Endothelial cell of umbilical vein (primary cell): ENCODE measurements at regions of chr2 and their contacts with region 1.

Region 1: DNA sequence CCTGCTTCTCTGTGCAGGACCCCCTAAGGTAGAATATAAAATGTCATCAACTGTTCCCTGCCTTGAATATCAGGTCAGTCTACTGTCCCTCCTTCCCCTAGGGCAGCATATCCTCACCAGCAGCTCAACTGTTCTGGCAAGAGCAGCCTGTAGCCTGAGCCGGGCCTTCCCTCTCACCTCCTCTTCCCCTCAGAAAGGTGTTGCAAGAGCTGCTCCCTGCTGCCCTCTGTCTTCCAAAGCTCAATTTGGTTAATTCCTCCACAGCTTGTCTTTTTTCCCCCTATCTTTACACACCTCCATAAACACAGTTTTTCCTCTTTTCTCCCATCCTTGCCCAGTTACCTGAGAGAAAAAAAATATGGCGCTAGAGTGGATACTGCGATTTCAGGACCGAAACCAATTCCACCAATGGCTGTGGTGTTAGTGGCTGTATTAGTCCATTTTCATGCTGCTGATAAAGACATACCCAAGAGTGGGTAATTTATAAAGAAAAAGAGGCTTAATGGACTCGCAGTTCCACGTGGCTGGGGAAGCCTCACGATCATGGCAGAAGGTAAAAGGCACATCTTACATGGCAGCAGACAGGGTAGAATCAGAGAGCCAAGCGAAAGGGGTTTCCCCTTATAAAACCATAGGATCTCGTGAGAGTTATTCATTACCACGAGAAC is 184.7 kb downstream of the MREG start:
- DNase-seq: peak; percentile 52
- H3K4me3 ChIP-seq: no peak overlapping the region
- H3K27ac ChIP-seq: no peak overlapping the region
- H3K4me1 ChIP-seq: peaks cover 47% of the 10 kb centered on the region
- H3K27me3 ChIP-seq: no peaks in the 10 kb centered on the region
- CTCF ChIP-seq: peak; percentile 49 to 62
- POLR2A ChIP-seq: no peak

Region 2: DNA sequence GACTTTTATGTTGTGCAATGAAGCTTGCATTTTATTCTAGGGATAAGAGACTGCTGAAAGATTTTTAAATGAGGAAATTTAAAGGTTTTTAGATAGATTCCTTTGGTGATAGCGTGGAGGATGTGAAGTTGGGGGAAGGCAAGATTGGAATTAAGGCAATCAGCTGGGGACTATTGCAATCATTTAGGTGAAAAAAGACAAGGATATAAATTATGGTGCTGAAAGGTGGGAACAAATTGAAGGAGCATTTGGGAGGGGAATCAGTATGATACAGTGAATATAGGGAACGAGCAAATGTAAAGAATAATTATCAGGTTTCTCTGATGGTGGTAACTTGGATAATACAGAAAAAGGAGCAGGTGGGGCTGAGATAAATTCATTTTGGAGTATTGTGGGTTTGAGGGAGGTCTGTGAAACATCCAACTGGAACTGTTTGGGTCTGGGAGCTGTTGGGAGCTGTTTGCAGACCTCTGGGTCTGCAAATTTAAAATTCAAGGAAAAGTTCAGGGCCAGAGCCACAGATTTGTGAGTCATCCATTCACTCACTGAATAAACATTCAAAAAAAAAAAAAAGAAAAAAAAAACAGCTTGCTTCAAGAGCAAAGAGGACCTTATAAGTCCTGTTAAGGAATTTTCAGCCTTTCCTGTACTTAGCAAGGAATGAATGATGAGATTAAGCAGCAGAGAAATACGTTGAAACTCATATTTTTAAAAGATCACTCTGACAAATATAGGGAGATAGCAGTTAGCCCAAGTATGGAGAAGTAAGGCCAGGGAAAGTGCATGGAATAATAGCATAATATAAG is 135.3 kb before region 1 on chr2:
- CTCF ChIA-PET with region 1: interaction called, 4 read pairs
- POLR2A ChIA-PET with region 1: no interaction called
- dilution Hi-C with region 1: no loop called
- intact Hi-C with region 1: loop called (anchors 2 kb)
- DNase-seq: peak; percentile 85
- H3K4me3 ChIP-seq: no peak overlapping the region
- H3K27ac ChIP-seq: peak overlapping the region; percentile 83
- H3K4me1 ChIP-seq: peaks cover 33% of the 10 kb centered on the region
- H3K27me3 ChIP-seq: no peaks in the 10 kb centered on the region
- CTCF ChIP-seq: no peak
- POLR2A ChIP-seq: no peak

Region 3: DNA sequence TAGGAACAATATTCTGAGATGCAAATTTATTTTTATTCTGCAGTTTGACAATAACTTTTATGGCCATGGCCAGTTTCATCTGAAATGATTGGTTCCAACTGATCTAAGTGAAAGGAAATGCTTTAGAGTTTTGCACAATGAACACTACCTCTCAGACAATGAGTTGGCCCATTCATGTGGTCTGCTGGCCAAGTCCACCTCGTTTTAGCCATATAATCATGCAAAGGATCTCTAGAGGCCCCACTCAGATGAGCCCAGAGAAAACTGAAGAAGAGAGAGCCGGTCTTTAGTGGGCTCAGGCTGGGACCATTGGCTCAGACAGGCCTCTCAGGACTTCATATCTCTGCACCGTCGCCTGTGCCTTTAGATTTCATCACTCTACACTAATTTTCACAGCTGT is 70.0 kb before region 1 on chr2:
- CTCF ChIA-PET with region 1: no interaction called
- POLR2A ChIA-PET with region 1: interaction called, 4 read pairs
- dilution Hi-C with region 1: no loop called
- intact Hi-C with region 1: loop called (anchors 5 kb)
- DNase-seq: peak; percentile 87
- H3K4me3 ChIP-seq: no peak overlapping the region
- H3K27ac ChIP-seq: peak overlapping the region; percentile 69
- H3K4me1 ChIP-seq: peaks cover 39% of the 10 kb centered on the region
- H3K27me3 ChIP-seq: no peaks in the 10 kb centered on the region
- CTCF ChIP-seq: no peak
- POLR2A ChIP-seq: no peak

Region 4: GRCh38 chr2:215793747-215794595 is 34.7 kb before region 1 on chr2:
- CTCF ChIA-PET with region 1: interaction called, 15 read pairs
- POLR2A ChIA-PET with region 1: no interaction called
- dilution Hi-C with region 1: no loop called
- intact Hi-C with region 1: no loop called
- DNase-seq: peak; percentile 97
- H3K4me3 ChIP-seq: no peak overlapping the region
- H3K27ac ChIP-seq: peak overlapping the region; percentile 82
- H3K4me1 ChIP-seq: peaks cover 44% of the 10 kb centered on the region
- H3K27me3 ChIP-seq: no peaks in the 10 kb centered on the region
- CTCF ChIP-seq: no peak
- POLR2A ChIP-seq: no peak

Region 5: GRCh38 chr2:215817046-215817445 is 11.6 kb before region 1 on chr2:
- CTCF ChIA-PET with region 1: interaction called, 11 read pairs
- POLR2A ChIA-PET with region 1: no interaction called
- dilution Hi-C with region 1: no loop called
- intact Hi-C with region 1: no loop called
- DNase-seq: no peak
- H3K4me3 ChIP-seq: no peak overlapping the region
- H3K27ac ChIP-seq: no peak overlapping the region
- H3K4me1 ChIP-seq: no peaks in the 10 kb centered on the region
- H3K27me3 ChIP-seq: no peaks in the 10 kb centered on the region
- CTCF ChIP-seq: no peak
- POLR2A ChIP-seq: no peak

Region 6: DNA sequence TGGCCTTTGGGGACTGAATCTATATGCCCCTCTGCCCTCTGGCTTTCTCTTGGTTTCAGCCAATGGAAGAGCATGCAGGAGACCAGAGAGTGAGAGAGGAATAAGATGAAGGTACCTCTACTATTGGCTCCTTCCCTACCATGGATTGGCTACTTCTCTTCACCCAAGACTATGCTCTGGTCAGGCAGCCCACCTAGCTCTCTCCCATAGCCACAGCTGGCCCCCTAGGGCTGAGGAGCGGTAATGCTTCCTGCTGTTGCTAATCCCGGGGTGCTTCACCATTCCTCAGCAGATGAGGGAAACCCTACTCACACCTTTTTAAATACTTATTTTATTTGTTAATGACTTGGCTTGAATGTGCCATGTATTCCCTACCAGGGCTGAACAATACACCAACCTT is 42.3 kb after region 1 on chr2:
- CTCF ChIA-PET with region 1: no interaction called
- POLR2A ChIA-PET with region 1: no interaction called
- dilution Hi-C with region 1: no loop called
- intact Hi-C with region 1: no loop called
- DNase-seq: no peak
- H3K4me3 ChIP-seq: no peak overlapping the region
- H3K27ac ChIP-seq: no peak overlapping the region
- H3K4me1 ChIP-seq: peaks cover 5% of the 10 kb centered on the region
- H3K27me3 ChIP-seq: no peaks in the 10 kb centered on the region
- CTCF ChIP-seq: peak; percentile 33 to 40
- POLR2A ChIP-seq: no peak